ENCODE measurements at regions of chr16 and their contacts with region 1.

Region 1: DNA sequence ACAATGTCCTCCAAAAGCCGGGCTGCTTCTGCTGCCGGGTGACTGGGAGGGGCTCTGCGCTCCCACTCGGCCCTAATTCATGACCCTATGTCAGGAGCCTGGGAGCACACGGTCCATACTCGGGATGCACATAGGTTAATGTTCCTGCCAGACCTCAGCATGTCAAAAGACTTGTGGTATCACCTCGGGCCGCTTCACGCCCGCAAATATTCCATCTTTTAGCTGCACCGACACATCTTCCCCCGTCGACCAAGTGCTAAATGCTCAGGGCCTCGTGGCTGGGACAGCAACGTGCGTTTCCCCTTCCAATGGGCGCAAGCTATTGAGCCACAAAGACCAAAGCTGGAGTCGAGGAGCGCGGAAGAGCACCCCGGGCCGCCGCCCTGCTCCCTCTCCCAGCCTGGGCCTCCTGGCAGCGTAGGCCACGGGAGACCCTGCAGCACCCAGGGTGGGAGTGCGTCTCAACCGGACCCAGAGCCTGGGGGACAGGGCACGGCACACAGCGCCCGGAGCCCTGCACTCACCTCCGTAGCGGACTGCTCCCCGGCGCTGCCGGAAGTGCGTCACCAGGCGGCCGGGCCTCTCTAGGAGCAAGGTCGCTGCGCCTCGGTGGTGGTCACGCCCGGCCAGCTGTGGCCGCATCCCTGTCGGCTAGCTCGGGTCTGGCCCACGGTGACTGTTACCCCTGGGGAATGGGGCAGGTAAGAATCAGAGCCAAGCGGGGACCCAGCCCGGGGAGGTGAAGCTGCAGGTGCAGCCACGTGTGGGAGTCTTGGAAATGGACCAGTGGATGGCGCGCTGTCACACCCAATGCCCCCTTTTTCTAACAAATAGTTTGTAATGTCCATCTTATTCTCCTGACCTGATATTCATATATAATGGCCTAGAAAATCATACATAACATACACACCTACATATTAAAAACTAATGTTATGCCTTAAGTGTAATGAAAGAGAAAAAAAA is at the start of gene ZNF23:
- DNase-seq: peak; percentile 74
- H3K4me3 ChIP-seq: peak within 1 kb of the TSS; percentile 91
- H3K27ac ChIP-seq: peak within 1 kb of the TSS; percentile 83
- H3K4me1 ChIP-seq: no peaks in the 10 kb centered on the region
- H3K27me3 ChIP-seq: no peaks in the 10 kb centered on the region
- CTCF ChIP-seq: peak; percentile 49
- total RNA-seq, gene ZNF23: 10.2 and 10.9 TPM in 2 replicates

Region 2: GRCh38 chr16:71441348-71441781 is 20.6 kb before region 1 on chr16:
- CTCF ChIA-PET with region 1: no interaction called
- POLR2A ChIA-PET with region 1: no interaction called
- intact Hi-C with region 1: no loop called
- DNase-seq: peak; percentile 10
- H3K4me3 ChIP-seq: no peak overlapping the region
- H3K27ac ChIP-seq: no peak overlapping the region
- H3K4me1 ChIP-seq: no peaks in the 10 kb centered on the region
- H3K27me3 ChIP-seq: peaks cover 7% of the 10 kb centered on the region
- CTCF ChIP-seq: peak; percentile 39; the same call in 1 of the 2 replicates

Region 3: DNA sequence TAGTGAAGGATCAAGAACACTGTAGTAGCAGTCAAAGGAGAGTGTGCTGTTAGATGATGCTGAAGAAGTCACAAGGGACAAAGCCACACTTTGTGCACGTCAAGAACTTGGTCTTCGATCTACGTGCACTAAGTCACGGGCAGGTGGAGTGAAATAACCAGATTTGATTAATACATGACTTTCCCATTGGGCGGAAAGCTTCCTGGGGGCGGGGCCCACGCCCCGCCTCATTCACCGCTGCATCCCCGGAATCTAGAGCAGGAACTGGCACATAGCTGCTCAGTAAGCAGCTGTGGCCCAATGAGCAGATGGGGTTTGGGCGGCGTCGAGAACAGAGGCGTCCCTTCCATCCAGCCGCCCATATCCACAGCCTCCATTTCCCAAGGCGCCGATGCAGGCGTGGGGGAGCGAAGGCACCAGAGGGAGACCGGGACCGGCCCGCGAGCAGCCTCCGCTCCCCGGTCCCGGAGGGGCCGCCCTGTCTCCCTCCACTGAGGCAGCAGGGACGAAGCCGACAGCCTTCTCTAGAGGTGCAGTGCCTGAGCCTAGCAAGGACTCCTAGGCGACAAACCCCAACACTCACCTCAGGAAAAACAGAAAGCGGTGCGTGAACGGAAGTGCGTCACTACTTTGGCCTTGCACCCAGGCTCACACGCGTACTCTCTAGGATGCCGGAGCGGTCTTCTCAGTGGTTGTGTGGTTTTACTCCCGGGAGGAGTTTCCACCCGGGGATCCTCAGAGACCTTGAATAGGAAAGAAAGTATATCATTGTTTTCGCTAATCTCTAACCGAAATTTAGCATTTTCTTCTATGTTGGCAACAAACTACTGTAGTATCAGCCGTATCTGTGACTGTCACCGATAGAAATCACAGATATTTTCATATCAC is 22.3 kb after region 1 on chr16:
- CTCF ChIA-PET with region 1: interaction called, 3 read pairs
- POLR2A ChIA-PET with region 1: no interaction called
- intact Hi-C with region 1: loop called (anchors 1 kb)
- DNase-seq: peak; percentile 93
- H3K4me3 ChIP-seq: peak overlapping the region; percentile 75
- H3K27ac ChIP-seq: peak overlapping the region; percentile 89
- H3K4me1 ChIP-seq: peaks cover 4% of the 10 kb centered on the region
- H3K27me3 ChIP-seq: no peaks in the 10 kb centered on the region
- CTCF ChIP-seq: no peak

Measured in A673 (cell line).